Motor neuron (in vitro differentiated cells): ENCODE measurements at regions of chr1 and their contacts with region 1.

Region 1: DNA sequence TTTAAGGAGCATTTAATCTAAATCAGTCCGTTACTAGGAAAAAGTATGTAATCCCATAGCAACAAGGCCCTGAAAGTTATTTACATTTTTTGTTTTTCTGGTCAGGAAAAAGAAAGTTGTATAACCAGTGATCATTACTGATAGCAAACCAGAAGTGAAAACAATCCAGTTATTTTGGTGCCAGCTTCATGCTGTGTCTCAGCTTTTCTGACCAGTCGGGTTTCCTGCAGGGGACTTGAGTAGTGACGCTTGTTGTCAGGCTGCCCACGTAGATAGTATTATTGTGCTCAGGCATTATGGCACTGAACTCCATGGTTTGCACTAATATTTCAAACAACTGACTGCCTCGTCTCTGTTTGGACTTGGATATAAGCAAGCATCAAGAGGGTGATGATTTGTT is 55.2 kb downstream of the SASS6 start:
- ATAC-seq: no peak
- H3K4me3 ChIP-seq: no peak overlapping the region
- H3K27ac ChIP-seq: no peak overlapping the region
- H3K4me1 ChIP-seq: no peaks in the 10 kb centered on the region

Region 2: GRCh38 chr1:99565606-99566289 is 511.8 kb before region 1 on chr1:
- in situ Hi-C with region 1: no loop called
- ATAC-seq: no peak
- H3K4me3 ChIP-seq: no peak overlapping the region
- H3K27ac ChIP-seq: no peak overlapping the region
- H3K4me1 ChIP-seq: no peaks in the 10 kb centered on the region

Region 3: DNA sequence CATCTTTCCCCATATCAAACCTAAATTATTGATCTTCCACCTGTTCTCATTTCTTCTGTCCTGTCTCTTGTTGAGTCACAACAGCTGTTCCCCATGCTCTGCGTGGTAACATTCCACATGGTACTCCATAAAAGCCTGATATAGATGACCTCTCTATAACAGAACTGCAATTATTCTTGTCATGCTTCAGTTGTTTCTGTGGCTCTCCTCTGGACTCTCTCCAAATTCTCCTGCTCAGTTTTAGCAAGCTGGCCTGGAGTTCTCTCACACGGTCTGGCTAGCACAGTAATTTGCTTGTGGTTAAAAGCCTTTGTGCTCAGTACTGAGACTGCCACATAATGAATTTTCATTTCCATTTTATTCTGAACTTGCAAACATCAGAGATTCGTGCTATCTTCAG is 111.1 kb after region 1 on chr1:
- in situ Hi-C with region 1: loop called in 1 of 9 experiments (anchors 25 kb)
- ATAC-seq: peak; percentile 62 to 96 (median 86)
- H3K4me3 ChIP-seq: no peak overlapping the region
- H3K27ac ChIP-seq: no peak overlapping the region
- H3K4me1 ChIP-seq: no peaks in the 10 kb centered on the region

Region 4: GRCh38 chr1:100265931-100266740 is 188.6 kb after region 1 on chr1 and contains the start of gene RTCA:
- in situ Hi-C with region 1: no loop called
- ATAC-seq: peak; percentile 96 to 99 (median 98)
- H3K4me3 ChIP-seq: peak within 1 kb of the TSS; percentile 62 to 89 (median 76)
- H3K27ac ChIP-seq: peak within 1 kb of the TSS; percentile 38 to 83
- H3K4me1 ChIP-seq: peaks cover 10 to 13% of the 10 kb centered on the region in 2 donors
- total RNA-seq, gene RTCA: 24.9 to 58.6 (median 41.7) TPM